Heart right ventricle (tissue), 16 donors: ENCODE measurements at regions of chr18 and their contacts with region 1.

Region 1: GRCh38 chr18:13221869-13222855 is 3.6 kb downstream of the LDLRAD4 start:
- DNase-seq: peak; percentile 77 to 79
- ATAC-seq: peak; percentile 44 to 79 (median 70)
- H3K4me3 ChIP-seq: peak overlapping the region in 9 of 10 donors; percentile 1 to 45 (median 19)
- H3K27ac ChIP-seq: peak overlapping the region; percentile 69 to 97 (median 92)
- H3K4me1 ChIP-seq: peaks cover 24 to 68% (median 60%) of the 10 kb centered on the region in 9 donors
- H3K27me3 ChIP-seq: peaks cover 0 to 17% (median 0%) of the 10 kb centered on the region in 7 donors
- CTCF ChIP-seq: peak in 1 of 9 donors; percentile 14

Region 2: GRCh38 chr18:11987527-11987926 is 1234.6 kb before region 1 on chr18:
- intact Hi-C with region 1: no loop called
- DNase-seq: no peak
- ATAC-seq: peak; percentile 59 to 85 (median 78)
- H3K4me3 ChIP-seq: no peak overlapping the region
- H3K27ac ChIP-seq: peak overlapping the region in 9 of 10 donors; percentile 36 to 72 (median 66)
- H3K4me1 ChIP-seq: peaks cover 0 to 63% (median 52%) of the 10 kb centered on the region in 9 donors
- H3K27me3 ChIP-seq: no peaks in the 10 kb centered on the region
- CTCF ChIP-seq: no peak

Region 3: DNA sequence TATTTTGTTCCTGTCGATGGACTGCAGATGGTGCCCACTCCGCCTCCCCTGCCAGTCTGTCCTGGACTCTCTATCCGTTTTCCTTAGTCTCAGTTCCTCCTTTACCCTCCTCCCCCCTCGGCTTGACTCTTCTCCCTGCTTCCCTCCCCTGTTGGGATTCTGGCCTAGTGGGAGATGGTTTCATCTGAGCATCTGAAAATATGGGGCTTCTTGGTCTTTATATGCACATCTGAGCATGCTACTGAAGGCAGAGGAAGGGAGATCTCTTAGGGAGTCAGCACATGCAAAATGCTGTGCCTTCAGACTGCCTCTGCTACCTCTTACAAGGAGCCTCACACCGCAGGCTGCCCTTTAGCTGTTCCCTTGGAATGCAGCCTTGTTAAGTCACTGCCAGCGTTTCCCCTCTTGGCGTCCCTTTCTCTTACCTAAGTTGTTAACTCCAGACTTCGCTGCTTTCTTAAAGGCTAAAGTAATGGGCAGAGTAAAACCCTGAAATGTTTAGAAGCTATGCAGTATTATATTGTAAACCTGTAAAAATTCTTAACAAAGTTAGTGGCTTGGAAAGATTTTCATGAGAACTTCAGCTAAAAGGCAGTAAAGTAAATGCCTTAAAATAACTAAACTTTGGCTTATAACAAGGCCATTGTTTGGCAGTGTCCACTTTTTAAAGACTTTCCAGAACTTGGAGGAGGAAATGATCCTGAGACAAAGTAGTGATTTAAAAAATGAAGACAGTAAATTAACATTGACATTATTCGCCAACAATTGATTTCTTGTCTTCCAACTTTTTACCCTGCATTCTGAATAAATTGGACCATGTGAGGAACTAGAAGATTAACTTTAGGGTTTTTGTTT is 46.2 kb after region 1 on chr18:
- intact Hi-C with region 1: loop called in 8 of 10 experiments (anchors 2 to 10 kb)
- DNase-seq: no peak
- ATAC-seq: peak in 1 of 8 donors; percentile 7
- H3K4me3 ChIP-seq: no peak overlapping the region
- H3K27ac ChIP-seq: peak overlapping the region; percentile 10 to 81 (median 66)
- H3K4me1 ChIP-seq: peaks cover 35 to 100% (median 93%) of the 10 kb centered on the region in 9 donors
- H3K27me3 ChIP-seq: no peaks in the 10 kb centered on the region
- CTCF ChIP-seq: no peak

Region 4: DNA sequence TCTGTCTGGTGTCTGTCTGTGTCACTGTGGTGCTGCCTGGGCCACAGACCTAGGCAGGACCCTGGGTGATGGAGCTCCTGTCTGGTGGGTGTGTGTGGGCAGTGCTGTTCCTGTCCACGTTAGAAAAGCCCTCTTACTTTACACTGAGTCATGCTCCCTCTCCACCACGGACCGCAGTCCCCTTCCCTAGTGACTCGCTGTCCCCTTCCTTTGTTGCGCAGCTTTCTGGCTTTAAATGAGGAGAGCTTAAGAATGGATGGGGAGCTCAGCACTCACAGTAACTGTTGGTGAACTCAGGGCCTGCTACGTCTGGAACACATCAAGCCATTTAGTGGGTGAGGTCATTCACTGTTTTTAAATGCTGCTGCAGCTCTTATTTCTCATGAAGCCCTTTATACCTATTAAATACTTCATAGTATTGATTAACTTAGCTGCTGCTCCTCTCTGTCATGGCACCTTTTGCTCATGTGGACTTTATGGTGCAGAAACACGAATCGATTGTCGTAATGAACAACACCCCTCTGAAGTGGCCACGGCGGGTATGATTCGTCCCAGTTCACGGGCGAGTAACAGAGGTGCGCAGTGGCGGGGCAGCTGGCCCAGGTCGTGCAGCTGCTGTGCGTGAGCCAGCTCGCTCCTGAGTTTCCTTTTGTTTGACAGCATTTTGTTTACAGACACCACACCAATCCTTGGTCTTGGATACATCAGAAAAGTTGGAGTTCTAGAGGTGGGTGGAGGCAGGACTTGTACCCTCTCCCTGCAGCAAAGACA is 96.8 kb after region 1 on chr18:
- intact Hi-C with region 1: loop called in 1 of 10 experiments (anchors 10 kb)
- DNase-seq: no peak
- ATAC-seq: peak; percentile 19 to 72 (median 69)
- H3K4me3 ChIP-seq: no peak overlapping the region
- H3K27ac ChIP-seq: peak overlapping the region in 7 of 10 donors; percentile 26 to 63 (median 49)
- H3K4me1 ChIP-seq: peaks cover 0 to 27% (median 18%) of the 10 kb centered on the region in 9 donors
- H3K27me3 ChIP-seq: no peaks in the 10 kb centered on the region
- CTCF ChIP-seq: no peak

Region 5: DNA sequence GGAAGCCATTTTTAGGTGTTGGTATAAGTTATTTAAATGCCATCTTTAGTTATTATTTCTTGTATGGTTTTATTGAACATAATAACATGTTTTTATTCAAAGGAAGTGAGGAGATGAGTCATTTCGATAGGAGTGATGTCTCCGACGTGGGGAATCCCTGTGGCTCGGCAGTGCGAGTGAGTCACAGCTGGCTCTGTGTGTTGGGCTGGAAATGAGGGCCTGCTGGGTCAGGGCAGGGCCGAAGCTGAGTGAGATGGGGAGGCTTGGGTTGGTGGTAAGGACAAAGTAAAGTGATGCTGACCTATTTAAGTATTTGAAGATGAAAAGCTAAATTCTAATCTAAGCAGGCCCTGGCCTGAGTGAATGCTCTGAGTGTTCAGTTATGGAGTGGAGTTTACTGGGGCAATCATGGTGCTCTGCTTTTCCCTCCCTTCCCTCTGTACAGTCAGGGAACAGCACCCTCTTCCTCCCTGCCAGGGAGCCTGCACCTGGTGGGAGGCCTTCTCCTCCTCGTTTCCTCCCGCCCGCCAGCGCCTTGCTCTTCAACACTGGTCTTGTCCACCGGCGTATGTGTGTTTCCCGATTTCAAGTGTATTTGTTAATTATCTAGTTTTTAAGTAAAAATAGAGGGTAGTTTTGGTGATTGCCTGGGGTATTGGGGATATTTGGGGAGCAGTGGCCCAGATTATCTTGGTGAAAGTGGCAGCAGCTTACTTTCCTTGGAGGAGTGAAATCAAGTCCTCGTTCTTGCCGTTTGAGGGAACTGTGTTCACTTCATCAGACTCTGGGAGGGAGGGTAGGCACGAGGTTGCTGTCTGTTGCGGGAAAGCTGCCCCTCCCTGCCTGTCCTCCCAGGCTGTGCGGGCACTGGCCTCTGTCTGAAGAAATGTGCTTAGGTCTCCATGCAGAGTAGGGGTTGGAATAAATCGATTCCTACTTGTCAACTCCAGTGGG is 153.4 kb after region 1 on chr18:
- intact Hi-C with region 1: loop called in 4 of 10 experiments (anchors 5 to 10 kb)
- DNase-seq: peak; percentile 59 to 76
- ATAC-seq: peak; percentile 51 to 89 (median 78)
- H3K4me3 ChIP-seq: no peak overlapping the region
- H3K27ac ChIP-seq: peak overlapping the region in 8 of 10 donors; percentile 3 to 75 (median 64)
- H3K4me1 ChIP-seq: peaks cover 11 to 78% (median 56%) of the 10 kb centered on the region in 9 donors
- H3K27me3 ChIP-seq: no peaks in the 10 kb centered on the region
- CTCF ChIP-seq: peak in 1 of 9 donors; percentile 30

Region 6: DNA sequence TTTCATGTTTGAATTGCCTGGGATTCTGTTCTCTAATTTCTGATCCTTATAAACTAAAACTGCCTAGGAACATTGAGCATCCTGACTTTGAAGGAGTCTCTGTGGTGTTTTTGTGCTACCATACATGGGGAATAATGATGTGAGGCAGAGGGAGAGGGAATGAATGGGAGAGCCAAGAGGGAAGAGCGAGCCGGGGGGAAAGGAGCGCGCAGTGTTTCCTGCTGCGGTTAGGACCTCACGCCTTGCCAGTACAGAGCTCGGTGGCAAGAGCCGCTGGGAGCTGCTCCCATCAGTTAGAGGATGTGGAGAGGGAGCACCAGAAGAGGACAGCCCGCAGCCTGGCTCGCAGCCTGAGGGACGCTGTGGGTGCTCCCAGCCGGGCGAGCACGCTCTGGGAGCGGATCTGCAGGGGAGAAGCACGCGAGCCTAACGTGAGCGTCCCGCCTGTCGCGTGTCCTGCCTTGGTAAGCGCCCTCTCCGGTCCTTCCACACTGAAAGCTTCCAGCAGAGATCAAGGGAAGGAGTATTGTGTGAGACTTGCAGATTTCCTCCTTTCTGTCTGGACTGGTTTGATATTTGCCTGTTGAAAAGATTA is 389.5 kb after region 1 on chr18:
- intact Hi-C with region 1: loop called in 4 of 10 experiments (anchors 2 to 5 kb)
- DNase-seq: peak; percentile 64 to 77
- ATAC-seq: peak; percentile 67 to 90 (median 74)
- H3K4me3 ChIP-seq: peak overlapping the region in 9 of 10 donors; percentile 17 to 54 (median 44)
- H3K27ac ChIP-seq: peak overlapping the region; percentile 68 to 88 (median 84)
- H3K4me1 ChIP-seq: peaks cover 17 to 75% (median 55%) of the 10 kb centered on the region in 9 donors
- H3K27me3 ChIP-seq: no peaks in the 10 kb centered on the region
- CTCF ChIP-seq: no peak